ENCODE measurements at regions of chr1 and their contacts with region 1.

Region 1: GRCh38 chr1:151839457-151840405 is at the start of gene C2CD4D:
- DNase-seq: no peak
- H3K4me3 ChIP-seq: no peak within 1 kb of the TSS
- H3K27ac ChIP-seq: no peak within 1 kb of the TSS
- H3K4me1 ChIP-seq: peaks cover 16% of the 10 kb centered on the region
- CTCF ChIP-seq: no peak
- total RNA-seq, gene C2CD4D: not detected in 2 replicates

Region 2: GRCh38 chr1:151720974-151721787 is 118.5 kb before region 1 on chr1 and contains the start of gene RIIAD1:
- CTCF ChIA-PET with region 1: no interaction called
- POLR2A ChIA-PET with region 1: no interaction called
- intact Hi-C with region 1: loop called (anchors 5 kb)
- DNase-seq: peak; percentile 56
- H3K4me3 ChIP-seq: peak within 1 kb of the TSS; percentile 68
- H3K27ac ChIP-seq: no peak within 1 kb of the TSS
- H3K4me1 ChIP-seq: peaks cover 16% of the 10 kb centered on the region
- CTCF ChIP-seq: no peak; the same call in none of the 2 replicates
- total RNA-seq, gene RIIAD1: not detected in 2 replicates

Region 3: GRCh38 chr1:151851886-151852285 is 12.2 kb after region 1 on chr1:
- CTCF ChIA-PET with region 1: no interaction called
- POLR2A ChIA-PET with region 1: no interaction called
- intact Hi-C with region 1: no loop called
- DNase-seq: no peak
- H3K4me3 ChIP-seq: no peak overlapping the region
- H3K27ac ChIP-seq: no peak overlapping the region
- H3K4me1 ChIP-seq: no peaks in the 10 kb centered on the region
- CTCF ChIP-seq: no peak

Measured in OCI-LY7 (cell line).